ENCODE measurements at regions of chr7 and their contacts with region 1.

Region 1: DNA sequence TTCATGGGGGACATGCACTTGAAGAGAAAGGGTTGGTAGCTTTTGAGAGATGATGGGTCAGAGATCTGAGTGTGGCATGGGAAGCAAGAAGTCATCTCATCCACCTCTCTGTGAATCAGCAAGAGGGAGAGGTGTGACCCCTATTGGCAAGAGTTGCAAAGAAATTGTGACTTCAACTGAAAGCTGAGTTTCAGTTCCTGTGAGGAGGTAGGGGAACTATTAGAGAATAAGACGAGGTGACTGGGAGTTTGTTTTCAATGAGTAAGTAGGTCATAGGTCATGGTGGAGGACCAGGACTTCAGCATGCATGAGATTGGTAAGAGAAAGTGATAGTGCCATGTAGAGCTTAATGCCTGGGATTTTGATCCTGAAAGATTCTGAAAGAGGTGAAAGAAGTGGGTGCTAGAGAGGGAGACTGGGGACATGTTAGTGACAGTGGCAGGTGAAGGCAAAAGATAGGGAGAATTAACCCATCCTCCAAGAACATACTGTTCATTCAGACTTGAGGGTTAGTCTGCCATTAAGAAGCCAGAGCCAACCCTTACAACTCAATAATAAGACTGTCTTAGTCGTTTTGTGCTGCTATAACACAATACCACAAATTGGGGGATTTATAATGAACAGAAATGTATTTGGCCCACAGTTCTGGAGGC is 75.5 kb upstream of the CAPZA2 start:
- DNase-seq: no peak
- ATAC-seq: peak; percentile 97
- H3K4me3 Mint-ChIP-seq: no peak overlapping the region
- H3K27ac Mint-ChIP-seq: no peak overlapping the region
- H3K4me1 Mint-ChIP-seq: no peaks in the 10 kb centered on the region
- H3K27me3 Mint-ChIP-seq: peaks cover 2% of the 10 kb centered on the region
- CTCF ChIP-seq: no peak

Region 2: GRCh38 chr7:116630932-116631745 is 155.8 kb before region 1 on chr7:
- CTCF ChIA-PET with region 1: no interaction called
- POLR2A ChIA-PET with region 1: no interaction called
- intact Hi-C with region 1: loop called (anchors 2 kb)
- DNase-seq: peak; percentile 36
- ATAC-seq: peak; percentile 84
- H3K4me3 Mint-ChIP-seq: peak overlapping the region; percentile 74
- H3K27ac Mint-ChIP-seq: peak overlapping the region; percentile 70
- H3K4me1 Mint-ChIP-seq: peaks cover 26% of the 10 kb centered on the region
- H3K27me3 Mint-ChIP-seq: peaks cover 6% of the 10 kb centered on the region
- CTCF ChIP-seq: no peak

Region 3: DNA sequence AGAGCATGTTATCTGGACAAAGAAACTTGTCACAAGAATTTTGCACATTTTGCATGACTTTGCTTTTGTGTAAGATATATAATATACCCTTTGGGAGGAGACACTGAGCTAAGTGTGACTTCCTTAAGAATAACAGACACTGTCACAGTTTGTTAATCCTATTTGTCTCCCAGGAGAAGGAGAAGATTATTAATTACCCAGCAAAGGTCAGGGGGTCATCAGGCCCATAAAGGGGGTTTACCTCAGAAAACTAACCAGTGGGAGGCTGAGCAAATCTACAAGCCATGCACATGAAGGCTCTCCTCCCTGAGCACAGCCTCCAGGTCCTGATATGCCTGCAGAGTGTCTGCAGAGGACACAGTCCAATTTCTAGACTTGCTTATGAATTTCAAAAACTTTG is 125.1 kb before region 1 on chr7:
- CTCF ChIA-PET with region 1: no interaction called
- POLR2A ChIA-PET with region 1: no interaction called
- intact Hi-C with region 1: no loop called
- DNase-seq: no peak
- ATAC-seq: no peak
- H3K4me3 Mint-ChIP-seq: no peak overlapping the region
- H3K27ac Mint-ChIP-seq: no peak overlapping the region
- H3K4me1 Mint-ChIP-seq: no peaks in the 10 kb centered on the region
- H3K27me3 Mint-ChIP-seq: peaks cover 41% of the 10 kb centered on the region
- CTCF ChIP-seq: no peak

Region 4: DNA sequence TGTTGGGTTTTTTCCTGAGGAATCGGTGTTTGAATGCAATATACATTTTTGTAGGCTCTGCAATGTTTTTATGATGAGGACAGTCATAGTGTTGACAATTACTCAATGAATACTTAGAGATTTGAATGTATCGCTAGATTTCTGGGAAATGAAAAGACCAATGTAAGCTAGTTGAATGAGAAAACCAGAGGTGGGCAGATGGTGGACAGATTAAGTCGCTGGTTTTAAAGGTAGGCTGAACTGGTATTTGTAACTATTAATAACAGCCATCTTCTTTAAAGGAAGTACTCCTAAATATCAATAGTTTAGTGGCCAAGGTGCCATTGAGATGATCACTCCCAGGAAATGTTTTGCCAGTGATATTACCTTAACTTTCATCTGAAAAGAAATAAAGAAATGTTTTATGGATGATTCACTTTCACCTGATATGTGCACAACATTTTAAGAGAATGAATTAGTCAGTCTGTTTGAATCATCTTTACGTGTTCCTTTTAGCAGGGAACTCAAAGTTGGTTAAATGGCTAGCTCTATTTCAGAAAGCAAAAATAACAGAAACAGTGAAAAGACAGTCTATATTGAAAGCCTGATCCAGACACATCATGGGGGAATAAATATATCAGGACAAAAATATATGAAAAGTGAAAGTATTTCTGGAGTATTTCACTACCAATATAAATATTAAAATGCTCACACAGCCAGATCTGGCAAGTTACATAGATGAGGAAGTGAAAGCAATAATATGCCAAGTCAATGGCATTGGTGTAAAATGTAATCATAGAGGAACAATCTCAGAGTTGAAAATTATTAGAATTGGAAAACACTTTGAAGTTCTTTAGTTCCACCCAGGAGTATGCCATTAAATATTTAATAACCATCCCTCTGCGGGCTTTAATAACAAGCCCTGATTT is 94.3 kb before region 1 on chr7:
- CTCF ChIA-PET with region 1: no interaction called
- POLR2A ChIA-PET with region 1: no interaction called
- intact Hi-C with region 1: loop called (anchors 5 kb)
- DNase-seq: no peak
- ATAC-seq: peak; percentile 54
- H3K4me3 Mint-ChIP-seq: peak overlapping the region; percentile 57
- H3K27ac Mint-ChIP-seq: no peak overlapping the region
- H3K4me1 Mint-ChIP-seq: peaks cover 21% of the 10 kb centered on the region
- H3K27me3 Mint-ChIP-seq: peaks cover 29% of the 10 kb centered on the region
- CTCF ChIP-seq: no peak

Region 5: GRCh38 chr7:116715077-116715476 is 71.8 kb before region 1 on chr7:
- CTCF ChIA-PET with region 1: no interaction called
- POLR2A ChIA-PET with region 1: no interaction called
- intact Hi-C with region 1: no loop called
- DNase-seq: no peak
- ATAC-seq: no peak
- H3K4me3 Mint-ChIP-seq: no peak overlapping the region
- H3K27ac Mint-ChIP-seq: no peak overlapping the region
- H3K4me1 Mint-ChIP-seq: no peaks in the 10 kb centered on the region
- H3K27me3 Mint-ChIP-seq: peaks cover 15% of the 10 kb centered on the region
- CTCF ChIP-seq: no peak

Region 6: GRCh38 chr7:116886543-116887156 is 99.7 kb after region 1 on chr7:
- CTCF ChIA-PET with region 1: no interaction called
- POLR2A ChIA-PET with region 1: no interaction called
- intact Hi-C with region 1: no loop called
- DNase-seq: no peak
- ATAC-seq: no peak
- H3K4me3 Mint-ChIP-seq: no peak overlapping the region
- H3K27ac Mint-ChIP-seq: no peak overlapping the region
- H3K4me1 Mint-ChIP-seq: peaks cover 21% of the 10 kb centered on the region
- H3K27me3 Mint-ChIP-seq: no peaks in the 10 kb centered on the region
- CTCF ChIP-seq: no peak